ENCODE measurements at regions of chr13 and their contacts with region 1.

Region 1: DNA sequence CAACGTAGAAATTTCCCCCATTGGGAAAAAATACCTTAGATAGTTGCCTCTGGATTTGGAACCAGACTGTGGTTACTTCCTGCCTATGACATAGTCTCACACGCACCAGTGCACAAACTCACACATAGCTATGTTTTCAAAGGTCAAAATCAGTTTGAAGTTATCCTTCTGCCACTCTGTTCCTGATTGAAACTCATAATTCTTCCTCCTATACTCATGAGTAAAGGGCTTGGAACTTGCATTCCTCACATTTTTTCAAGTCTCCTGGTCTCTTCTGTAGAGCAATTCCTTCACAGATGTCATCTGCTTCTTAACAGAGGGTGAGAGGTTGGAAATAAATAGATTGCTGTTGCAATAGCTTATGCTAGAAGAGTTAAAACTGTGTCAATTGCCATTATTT is 18.6 kb upstream of the POSTN start:
- DNase-seq: peak; percentile 59
- H3K4me3 ChIP-seq: no peak overlapping the region
- H3K27ac ChIP-seq: peak overlapping the region; percentile 70
- H3K4me1 ChIP-seq: peaks cover 8% of the 10 kb centered on the region
- H3K27me3 ChIP-seq: no peaks in the 10 kb centered on the region
- CTCF ChIP-seq: no peak
- POLR2A ChIP-seq: no peak

Region 2: GRCh38 chr13:37134411-37135041 is 482.6 kb before region 1 on chr13:
- CTCF ChIA-PET with region 1: no interaction called
- POLR2A ChIA-PET with region 1: no interaction called
- dilution Hi-C with region 1: no loop called
- intact Hi-C with region 1: loop called (anchors 1 kb)
- DNase-seq: peak; percentile 89
- H3K4me3 ChIP-seq: peak overlapping the region in 1 of 3 experiments; percentile 5
- H3K27ac ChIP-seq: peak overlapping the region; percentile 92
- H3K4me1 ChIP-seq: peaks cover 44% of the 10 kb centered on the region
- H3K27me3 ChIP-seq: no peaks in the 10 kb centered on the region
- CTCF ChIP-seq: no peak
- POLR2A ChIP-seq: no peak

Region 3: GRCh38 chr13:37476874-37477273 is 140.3 kb before region 1 on chr13:
- CTCF ChIA-PET with region 1: no interaction called
- POLR2A ChIA-PET with region 1: no interaction called
- dilution Hi-C with region 1: no loop called
- intact Hi-C with region 1: no loop called
- DNase-seq: no peak
- H3K4me3 ChIP-seq: no peak overlapping the region
- H3K27ac ChIP-seq: no peak overlapping the region
- H3K4me1 ChIP-seq: no peaks in the 10 kb centered on the region
- H3K27me3 ChIP-seq: peaks cover 0 to 2% of the 10 kb centered on the region in 2 experiments
- CTCF ChIP-seq: no peak
- POLR2A ChIP-seq: no peak

Region 4: DNA sequence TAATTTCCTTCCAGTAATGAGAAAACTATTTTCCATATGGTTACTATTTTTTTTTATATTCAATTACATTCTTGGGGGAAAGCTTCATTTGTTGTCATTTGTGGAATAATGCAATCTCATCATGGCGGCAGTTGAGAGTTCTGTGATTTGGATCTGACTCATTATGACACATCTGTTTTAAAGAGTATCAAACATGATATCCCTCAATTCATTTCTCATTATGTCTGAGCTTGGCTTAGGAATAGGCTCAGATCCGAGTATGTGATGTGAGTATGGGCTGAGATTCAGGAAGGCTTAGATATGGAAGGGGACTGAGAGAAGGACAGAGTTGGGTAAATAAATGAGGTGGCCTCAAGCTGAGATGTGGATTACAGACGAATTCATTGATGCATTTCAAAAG is 83.0 kb before region 1 on chr13:
- CTCF ChIA-PET with region 1: no interaction called
- POLR2A ChIA-PET with region 1: no interaction called
- dilution Hi-C with region 1: no loop called
- intact Hi-C with region 1: no loop called
- DNase-seq: no peak
- H3K4me3 ChIP-seq: no peak overlapping the region
- H3K27ac ChIP-seq: no peak overlapping the region
- H3K4me1 ChIP-seq: no peaks in the 10 kb centered on the region
- H3K27me3 ChIP-seq: no peaks in the 10 kb centered on the region
- CTCF ChIP-seq: no peak
- POLR2A ChIP-seq: no peak

Region 5: DNA sequence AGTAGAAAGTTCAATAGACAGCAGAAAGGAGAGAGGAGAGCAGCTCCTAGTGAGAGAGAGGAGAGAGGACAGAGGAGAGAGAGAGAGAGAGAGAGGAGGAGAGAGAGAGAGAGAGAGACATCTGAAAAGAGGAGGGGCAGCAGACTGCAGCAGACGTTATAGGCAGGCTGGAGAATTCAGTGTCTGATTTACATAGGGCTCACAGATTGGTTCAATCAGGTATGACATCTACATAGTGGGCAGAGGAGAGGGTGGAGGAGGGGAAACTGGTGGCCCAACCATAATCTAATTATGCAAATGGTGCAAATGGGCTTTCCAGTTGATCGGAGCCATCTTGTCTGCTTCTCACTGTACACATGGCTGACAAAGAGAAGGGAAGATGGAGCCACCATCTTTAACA is 473.8 kb after region 1 on chr13:
- CTCF ChIA-PET with region 1: no interaction called
- POLR2A ChIA-PET with region 1: interaction called, 12 read pairs
- dilution Hi-C with region 1: no loop called
- intact Hi-C with region 1: no loop called
- DNase-seq: no peak
- H3K4me3 ChIP-seq: no peak overlapping the region
- H3K27ac ChIP-seq: no peak overlapping the region
- H3K4me1 ChIP-seq: no peaks in the 10 kb centered on the region
- H3K27me3 ChIP-seq: no peaks in the 10 kb centered on the region
- CTCF ChIP-seq: no peak
- POLR2A ChIP-seq: no peak